ENCODE measurements at regions of chr2 and their contacts with region 1.

Region 1: GRCh38 chr2:60641811-60642788 is 88.6 kb upstream of the BCL11A start:
- DNase-seq: peak; percentile 18
- H3K4me3 ChIP-seq: no peak overlapping the region
- H3K27ac ChIP-seq: no peak overlapping the region
- H3K27me3 ChIP-seq: no peaks in the 10 kb centered on the region
- CTCF ChIP-seq: peak; percentile 71

Region 2: GRCh38 chr2:60629801-60630385 is 12.2 kb before region 1 on chr2:
- CTCF ChIA-PET with region 1: interaction called, 10 read pairs
- POLR2A ChIA-PET with region 1: no interaction called
- DNase-seq: no peak
- H3K4me3 ChIP-seq: no peak overlapping the region
- H3K27ac ChIP-seq: no peak overlapping the region
- H3K27me3 ChIP-seq: no peaks in the 10 kb centered on the region
- CTCF ChIP-seq: no peak

Region 3: GRCh38 chr2:60652832-60653340 is 10.8 kb after region 1 on chr2:
- CTCF ChIA-PET with region 1: interaction called, 10 read pairs
- POLR2A ChIA-PET with region 1: no interaction called
- DNase-seq: no peak
- H3K4me3 ChIP-seq: no peak overlapping the region
- H3K27ac ChIP-seq: no peak overlapping the region
- H3K27me3 ChIP-seq: peaks cover 15% of the 10 kb centered on the region
- CTCF ChIP-seq: no peak

Region 4: DNA sequence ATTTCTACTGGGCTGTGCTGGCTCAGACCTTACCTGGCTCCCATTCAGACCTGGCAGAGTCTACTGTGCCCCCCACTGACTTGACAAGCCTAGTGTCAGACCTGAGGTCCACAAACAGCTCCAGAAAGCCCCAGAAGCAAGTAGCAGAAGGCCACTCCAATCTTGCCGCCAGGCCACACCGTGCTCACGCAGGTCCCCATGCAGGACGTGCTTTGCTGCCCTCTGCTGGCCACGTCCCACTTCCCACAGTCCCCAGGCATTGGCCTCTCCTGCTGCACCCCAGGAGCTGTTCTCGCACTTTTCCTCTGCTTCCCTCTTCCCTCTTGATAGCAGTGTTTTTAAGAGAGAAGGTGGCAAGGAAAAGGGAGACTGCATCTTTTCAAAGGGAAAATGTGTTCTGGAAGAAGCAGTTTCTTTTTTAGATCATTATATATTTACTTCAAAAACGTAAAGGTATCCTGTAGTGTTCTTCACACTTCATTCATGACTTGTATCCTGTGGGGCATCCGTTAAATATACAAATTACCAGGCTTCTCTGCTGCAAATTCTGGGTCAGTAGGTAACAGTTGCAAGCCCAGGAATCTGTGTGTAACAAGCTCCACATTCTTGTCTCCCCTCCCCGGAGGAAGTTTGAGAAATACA is 32.5 kb after region 1 on chr2:
- CTCF ChIA-PET with region 1: interaction called, 11 read pairs
- POLR2A ChIA-PET with region 1: no interaction called
- DNase-seq: peak; percentile 26
- H3K4me3 ChIP-seq: no peak overlapping the region
- H3K27ac ChIP-seq: no peak overlapping the region
- H3K27me3 ChIP-seq: peaks cover 7% of the 10 kb centered on the region
- CTCF ChIP-seq: peak; percentile 92

Region 5: DNA sequence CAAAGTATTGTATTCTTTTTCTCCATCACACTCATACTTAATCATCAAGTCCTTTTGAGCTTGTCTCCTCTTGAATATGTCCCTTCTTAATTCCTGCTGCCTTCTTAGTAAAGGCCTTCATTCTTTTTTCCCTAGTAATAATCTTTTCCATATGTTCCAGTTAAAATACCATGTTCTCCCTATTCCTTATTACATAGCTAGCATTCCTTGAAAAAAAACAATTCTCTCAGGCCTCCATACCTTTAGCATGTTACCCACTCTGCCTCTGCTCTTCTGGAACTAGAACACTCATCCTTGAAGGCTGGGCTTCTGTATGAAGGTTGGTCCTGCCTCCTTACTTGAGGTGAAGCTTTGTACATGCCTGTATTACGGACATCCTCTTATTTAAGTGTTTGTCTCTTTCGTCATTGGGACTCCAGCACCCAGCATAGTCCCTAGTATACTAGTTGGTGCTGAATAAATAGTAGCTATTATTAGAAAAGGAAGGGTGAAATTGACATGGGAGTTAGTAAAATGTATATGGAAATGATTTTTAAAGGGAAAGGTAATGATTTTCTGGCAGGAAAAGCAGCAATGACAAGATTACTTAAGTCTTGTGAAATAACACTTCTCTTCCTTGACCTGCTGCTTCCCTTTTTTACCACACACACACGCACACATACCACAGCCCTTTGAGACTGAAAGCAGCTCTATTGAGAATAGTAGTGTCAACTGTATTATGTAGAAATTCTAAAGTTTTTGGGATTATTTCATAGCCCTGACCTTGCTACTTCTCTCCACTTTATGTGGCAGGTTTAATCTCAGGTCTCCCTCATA is 284.8 kb after region 1 on chr2:
- CTCF ChIA-PET with region 1: no interaction called
- POLR2A ChIA-PET with region 1: no interaction called
- DNase-seq: peak; percentile 13
- H3K4me3 ChIP-seq: no peak overlapping the region
- H3K27ac ChIP-seq: no peak overlapping the region
- H3K27me3 ChIP-seq: no peaks in the 10 kb centered on the region
- CTCF ChIP-seq: no peak

Region 6: GRCh38 chr2:61074100-61074499 is 432.0 kb after region 1 on chr2:
- CTCF ChIA-PET with region 1: no interaction called
- POLR2A ChIA-PET with region 1: no interaction called
- DNase-seq: no peak
- H3K4me3 ChIP-seq: no peak overlapping the region
- H3K27ac ChIP-seq: no peak overlapping the region
- H3K27me3 ChIP-seq: no peaks in the 10 kb centered on the region
- CTCF ChIP-seq: no peak